Activated T-helper 1 cell treated with anti-CD3 and anti-CD28 coated beads, Interleukin-12 subunit alpha, Interleukin-12 subunit beta, Interleukin-2, Interleukin-4 antibody, amounts not matched to agents 30 ng/mL and 10 ng/mL and 1 ng/mL, durations not matched to agents 14 hours and 24 hours and 36 hours (primary cell): ENCODE measurements at regions of chr7 and their contacts with region 1.

Region 1: GRCh38 chr7:44980393-44981034 is 1.7 kb upstream of the MYO1G start:
- DNase-seq: peak; percentile 56
- H3K4me3 Mint-ChIP-seq: peak overlapping the region; percentile 98
- H3K27ac Mint-ChIP-seq: peak overlapping the region; percentile 98
- H3K4me1 Mint-ChIP-seq: peaks cover 78% of the 10 kb centered on the region
- H3K27me3 Mint-ChIP-seq: no peaks in the 10 kb centered on the region

Region 2: GRCh38 chr7:44914992-44915607 is 65.4 kb before region 1 on chr7:
- intact Hi-C with region 1: loop called (anchors 1 kb)
- DNase-seq: peak; percentile 78
- H3K4me3 Mint-ChIP-seq: peak overlapping the region; percentile 67
- H3K27ac Mint-ChIP-seq: peak overlapping the region; percentile 85
- H3K4me1 Mint-ChIP-seq: peaks cover 16% of the 10 kb centered on the region
- H3K27me3 Mint-ChIP-seq: peaks cover 2% of the 10 kb centered on the region

Region 3: GRCh38 chr7:44999245-45000095 is 19.0 kb after region 1 on chr7:
- intact Hi-C with region 1: loop called (anchors 1 kb)
- DNase-seq: peak; percentile 99
- H3K4me3 Mint-ChIP-seq: peak overlapping the region; percentile 88
- H3K27ac Mint-ChIP-seq: peak overlapping the region; percentile 91
- H3K4me1 Mint-ChIP-seq: peaks cover 58% of the 10 kb centered on the region
- H3K27me3 Mint-ChIP-seq: no peaks in the 10 kb centered on the region

Region 4: GRCh38 chr7:45026984-45027773 is 46.7 kb after region 1 on chr7:
- intact Hi-C with region 1: loop called (anchors 1 kb)
- DNase-seq: peak; percentile 42
- H3K4me3 Mint-ChIP-seq: peak overlapping the region; percentile 92
- H3K27ac Mint-ChIP-seq: peak overlapping the region; percentile 93
- H3K4me1 Mint-ChIP-seq: peaks cover 72% of the 10 kb centered on the region
- H3K27me3 Mint-ChIP-seq: no peaks in the 10 kb centered on the region

Region 5: DNA sequence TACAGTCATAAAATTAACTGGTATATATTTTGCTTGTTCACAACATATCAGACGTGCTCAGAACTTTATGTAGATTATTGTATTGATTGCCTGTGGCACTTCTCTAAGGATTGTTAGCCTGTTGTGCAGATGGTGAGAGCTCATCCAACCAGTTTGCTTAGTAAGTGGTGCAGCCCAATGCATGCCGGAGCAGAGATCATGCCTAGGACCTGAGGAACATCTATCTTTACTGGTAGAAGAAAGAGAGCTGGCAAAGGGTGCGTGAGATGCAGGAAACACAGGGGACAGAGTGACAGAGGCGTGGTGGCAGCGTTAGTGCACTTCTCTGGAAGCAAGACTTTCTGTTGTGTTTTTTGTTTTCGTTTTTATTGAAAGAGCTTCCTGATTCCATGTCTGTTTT is 55.4 kb after region 1 on chr7:
- intact Hi-C with region 1: loop called (anchors 2 kb)
- DNase-seq: no peak
- H3K4me3 Mint-ChIP-seq: peak overlapping the region; percentile 71
- H3K27ac Mint-ChIP-seq: peak overlapping the region; percentile 88
- H3K4me1 Mint-ChIP-seq: peaks cover 64% of the 10 kb centered on the region
- H3K27me3 Mint-ChIP-seq: no peaks in the 10 kb centered on the region

Region 6: DNA sequence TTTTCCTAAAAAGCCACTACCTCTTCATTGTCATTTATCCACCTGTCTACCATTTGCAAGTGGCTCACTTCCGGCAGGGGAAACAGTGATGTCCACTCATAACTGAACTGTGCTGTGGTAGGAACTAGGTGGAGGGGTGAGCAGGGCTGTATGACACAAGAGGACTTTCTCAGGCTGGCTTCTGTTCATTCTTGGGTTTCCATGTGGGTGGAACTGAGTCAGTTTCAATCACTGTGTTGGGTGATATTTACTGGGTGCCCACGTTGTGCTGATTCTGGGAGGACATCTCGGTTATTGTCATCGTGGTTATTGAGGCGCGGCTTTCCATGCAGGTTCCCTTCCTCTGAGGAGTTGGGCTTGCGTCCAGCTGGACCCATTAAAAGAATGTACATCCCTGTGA is 215.9 kb after region 1 on chr7:
- intact Hi-C with region 1: loop called (anchors 1 kb)
- DNase-seq: peak; percentile 14
- H3K4me3 Mint-ChIP-seq: no peak overlapping the region
- H3K27ac Mint-ChIP-seq: peak overlapping the region; percentile 83
- H3K4me1 Mint-ChIP-seq: peaks cover 67% of the 10 kb centered on the region
- H3K27me3 Mint-ChIP-seq: peaks cover 4% of the 10 kb centered on the region